Mammary epithelial cell (primary cell): ENCODE measurements at regions of chr4 and their contacts with region 1.

Region 1: DNA sequence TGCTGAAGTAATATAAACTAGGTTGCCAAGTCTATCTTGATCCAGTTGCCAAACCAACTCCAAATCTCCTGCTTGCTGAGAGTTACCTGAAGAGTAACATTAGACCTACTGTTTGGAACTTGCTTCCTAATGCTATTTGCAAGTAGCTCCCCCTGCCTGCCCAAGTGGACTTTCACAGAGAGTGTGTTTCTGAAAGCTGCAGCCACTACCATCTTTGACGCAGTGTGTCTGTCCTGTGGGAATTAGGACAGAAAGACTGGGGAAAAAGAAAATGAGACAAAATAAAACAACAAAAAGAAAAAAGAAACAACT is 195.0 kb upstream of the HS3ST1 start:
- DNase-seq: peak; percentile 57
- H3K4me3 ChIP-seq: no peak overlapping the region
- H3K27ac ChIP-seq: peak overlapping the region; percentile 91
- H3K4me1 ChIP-seq: peaks cover 60% of the 10 kb centered on the region
- H3K27me3 ChIP-seq: no peaks in the 10 kb centered on the region
- CTCF ChIP-seq: peak in 1 of 2 donors; percentile 72

Region 2: GRCh38 chr4:11436673-11437072 is 187.0 kb before region 1 on chr4:
- CTCF ChIA-PET with region 1: no interaction called
- dilution Hi-C with region 1: no loop called
- in situ Hi-C with region 1: loop called in 1 of 2 experiments (anchors 10 kb)
- intact Hi-C with region 1: no loop called
- DNase-seq: peak; percentile 63
- H3K4me3 ChIP-seq: no peak overlapping the region
- H3K27ac ChIP-seq: no peak overlapping the region
- H3K4me1 ChIP-seq: peaks cover 28% of the 10 kb centered on the region
- H3K27me3 ChIP-seq: no peaks in the 10 kb centered on the region
- CTCF ChIP-seq: no peak

Region 3: DNA sequence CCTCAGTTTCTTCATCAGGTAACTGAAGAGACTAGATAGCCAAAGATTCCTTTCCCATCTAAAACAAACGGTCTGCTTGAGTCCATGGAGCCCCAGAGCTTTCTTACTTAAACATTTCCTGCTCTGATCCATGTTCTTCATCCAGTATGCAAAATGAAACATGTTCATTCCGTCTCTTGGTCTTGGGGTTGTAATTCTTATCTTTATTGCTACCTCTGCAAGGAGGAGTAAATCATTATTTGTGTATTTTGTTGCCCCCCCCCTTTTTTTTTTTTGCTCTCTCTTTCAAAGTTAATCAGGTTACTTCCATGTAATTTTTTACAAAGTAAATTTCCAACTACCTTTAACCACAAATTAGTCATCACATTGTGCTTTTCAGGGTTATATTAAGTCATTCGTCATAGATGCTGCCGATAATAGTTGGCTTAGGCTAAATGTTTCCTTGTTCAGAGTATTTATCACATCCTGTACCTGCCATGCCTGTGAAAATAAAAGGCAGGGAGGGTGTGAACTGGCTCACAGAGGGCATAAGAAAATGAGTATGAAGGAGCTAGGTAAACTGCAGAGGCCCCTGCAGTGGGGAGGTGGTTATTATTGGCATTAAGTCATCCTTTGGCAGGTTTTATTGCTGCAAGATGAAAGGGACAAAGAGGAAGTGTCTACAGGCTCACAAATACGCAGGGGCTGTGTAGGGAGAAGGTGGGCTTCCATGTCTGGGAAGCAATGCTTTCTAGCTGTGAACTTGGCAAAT is 118.3 kb before region 1 on chr4:
- CTCF ChIA-PET with region 1: no interaction called
- dilution Hi-C with region 1: no loop called
- in situ Hi-C with region 1: loop called in 1 of 2 experiments (anchors 10 kb)
- intact Hi-C with region 1: no loop called
- DNase-seq: peak; percentile 98
- H3K4me3 ChIP-seq: no peak overlapping the region
- H3K27ac ChIP-seq: peak overlapping the region; percentile 84
- H3K4me1 ChIP-seq: peaks cover 31% of the 10 kb centered on the region
- H3K27me3 ChIP-seq: no peaks in the 10 kb centered on the region
- CTCF ChIP-seq: no peak

Region 4: GRCh38 chr4:11548597-11549082 is 75.0 kb before region 1 on chr4:
- CTCF ChIA-PET with region 1: no interaction called
- dilution Hi-C with region 1: loop called (anchors 5 kb)
- in situ Hi-C with region 1: loop called in 1 of 2 experiments (anchors 10 kb)
- intact Hi-C with region 1: loop called (anchors 5 kb)
- DNase-seq: peak; percentile 86
- H3K4me3 ChIP-seq: no peak overlapping the region
- H3K27ac ChIP-seq: peak overlapping the region; percentile 82
- H3K4me1 ChIP-seq: peaks cover 34% of the 10 kb centered on the region
- H3K27me3 ChIP-seq: no peaks in the 10 kb centered on the region
- CTCF ChIP-seq: no peak

Region 5: GRCh38 chr4:11698846-11699590 is 75.3 kb after region 1 on chr4:
- CTCF ChIA-PET with region 1: no interaction called
- dilution Hi-C with region 1: loop called (anchors 5 kb)
- in situ Hi-C with region 1: no loop called
- intact Hi-C with region 1: loop called (anchors 1 kb)
- DNase-seq: peak; percentile 91
- H3K4me3 ChIP-seq: no peak overlapping the region
- H3K27ac ChIP-seq: peak overlapping the region; percentile 91
- H3K4me1 ChIP-seq: peaks cover 56% of the 10 kb centered on the region
- H3K27me3 ChIP-seq: no peaks in the 10 kb centered on the region
- CTCF ChIP-seq: no peak

Region 6: DNA sequence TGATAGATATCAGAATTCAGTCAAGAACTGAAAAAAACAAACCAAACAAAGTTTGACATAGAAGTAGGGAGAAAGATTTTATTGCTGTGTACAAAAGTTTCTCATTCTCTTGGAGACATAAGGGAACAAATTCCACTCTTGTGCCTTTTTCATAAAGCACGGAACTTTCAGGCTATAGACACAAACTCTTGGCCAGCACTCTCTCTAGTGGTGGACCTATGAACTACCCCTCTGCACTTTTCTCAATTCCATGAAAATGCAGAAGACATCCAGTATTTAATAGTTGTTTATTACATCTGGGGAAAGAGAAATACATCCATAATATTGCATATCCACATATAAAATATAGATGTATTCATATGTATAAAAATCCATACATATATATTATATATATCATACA is 96.6 kb after region 1 on chr4:
- CTCF ChIA-PET with region 1: no interaction called
- dilution Hi-C with region 1: no loop called
- in situ Hi-C with region 1: no loop called
- intact Hi-C with region 1: loop called (anchors 1 kb)
- DNase-seq: peak; percentile 43
- H3K4me3 ChIP-seq: no peak overlapping the region
- H3K27ac ChIP-seq: peak overlapping the region; percentile 6
- H3K4me1 ChIP-seq: peaks cover 7% of the 10 kb centered on the region
- H3K27me3 ChIP-seq: no peaks in the 10 kb centered on the region
- CTCF ChIP-seq: peak; percentile 89 to 95